Lower lobe of right lung (tissue), 2 donors: ENCODE measurements at regions of chr18 and their contacts with region 1.

Region 1: GRCh38 chr18:50218432-50219197 is 23.7 kb upstream of the MYO5B start:
- DNase-seq: no peak
- ATAC-seq: peak; percentile 73 to 74
- H3K4me3 ChIP-seq: no peak overlapping the region
- H3K27ac ChIP-seq: no peak overlapping the region
- H3K4me1 ChIP-seq: no peaks in the 10 kb centered on the region
- H3K27me3 ChIP-seq: peaks cover 10% of the 10 kb centered on the region
- CTCF ChIP-seq: peak; percentile 39

Region 2: GRCh38 chr18:50356036-50356945 is 137.7 kb after region 1 on chr18:
- intact Hi-C with region 1: loop called (anchors 5 kb)
- DNase-seq: no peak
- ATAC-seq: peak; percentile 72 to 77
- H3K4me3 ChIP-seq: no peak overlapping the region
- H3K27ac ChIP-seq: no peak overlapping the region
- H3K4me1 ChIP-seq: no peaks in the 10 kb centered on the region
- H3K27me3 ChIP-seq: peaks cover 26% of the 10 kb centered on the region
- CTCF ChIP-seq: no peak

Region 3: GRCh38 chr18:50473881-50474280 is 255.3 kb after region 1 on chr18:
- intact Hi-C with region 1: no loop called
- DNase-seq: no peak
- ATAC-seq: no peak
- H3K4me3 ChIP-seq: no peak overlapping the region
- H3K27ac ChIP-seq: no peak overlapping the region
- H3K4me1 ChIP-seq: no peaks in the 10 kb centered on the region
- H3K27me3 ChIP-seq: no peaks in the 10 kb centered on the region
- CTCF ChIP-seq: no peak